Aorta (tissue), 5 donors: ENCODE measurements at regions of chr12 and their contacts with region 1.

Region 1: GRCh38 chr12:76470028-76470939 is 89.3 kb downstream of the OSBPL8 start:
- DNase-seq: no peak
- ATAC-seq: peak; percentile 80
- H3K4me3 ChIP-seq: no peak overlapping the region
- H3K27ac ChIP-seq: no peak overlapping the region
- H3K4me1 ChIP-seq: peaks cover 3 to 6% of the 10 kb centered on the region in 2 donors
- H3K27me3 ChIP-seq: no peaks in the 10 kb centered on the region

Region 2: GRCh38 chr12:76551482-76551888 is 81.2 kb after region 1 on chr12:
- intact Hi-C with region 1: loop called in 1 of 2 experiments (anchors 5 kb)
- DNase-seq: no peak
- ATAC-seq: no peak
- H3K4me3 ChIP-seq: no peak overlapping the region
- H3K27ac ChIP-seq: no peak overlapping the region
- H3K4me1 ChIP-seq: peaks cover 0 to 3% of the 10 kb centered on the region in 2 donors
- H3K27me3 ChIP-seq: no peaks in the 10 kb centered on the region

Region 3: DNA sequence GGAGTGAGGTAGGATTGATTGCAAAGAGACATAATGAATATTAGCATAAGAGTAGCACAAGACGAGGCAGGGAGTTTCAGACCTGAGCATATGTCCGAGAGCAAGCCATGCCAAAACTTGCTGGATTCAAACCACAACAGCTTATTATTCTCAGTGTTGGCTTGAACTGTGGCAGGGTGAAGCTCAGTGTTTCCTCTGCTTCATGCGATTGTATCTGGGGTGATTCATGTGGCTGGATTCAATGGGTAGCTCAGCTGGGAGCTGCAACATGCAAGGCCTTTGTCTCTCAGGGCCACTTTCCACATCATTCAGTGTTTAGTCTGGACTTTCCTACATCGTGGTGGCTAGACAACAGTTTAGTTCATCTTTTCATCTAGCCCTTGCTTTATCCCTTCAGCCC is 617.1 kb after region 1 on chr12:
- intact Hi-C with region 1: no loop called
- DNase-seq: no peak
- ATAC-seq: no peak
- H3K4me3 ChIP-seq: no peak overlapping the region
- H3K27ac ChIP-seq: no peak overlapping the region
- H3K4me1 ChIP-seq: no peaks in the 10 kb centered on the region
- H3K27me3 ChIP-seq: no peaks in the 10 kb centered on the region